ENCODE measurements at regions of chr4 and their contacts with region 1.

Region 1: GRCh38 chr4:86497980-86498862 is 95.9 kb upstream of the PTPN13 start:
- DNase-seq: no peak
- ATAC-seq: peak; percentile 96
- H3K4me3 Mint-ChIP-seq: no peak overlapping the region
- H3K27ac Mint-ChIP-seq: no peak overlapping the region
- H3K4me1 Mint-ChIP-seq: peaks cover 35% of the 10 kb centered on the region
- H3K27me3 Mint-ChIP-seq: no peaks in the 10 kb centered on the region
- CTCF ChIP-seq: peak; percentile 55

Region 2: DNA sequence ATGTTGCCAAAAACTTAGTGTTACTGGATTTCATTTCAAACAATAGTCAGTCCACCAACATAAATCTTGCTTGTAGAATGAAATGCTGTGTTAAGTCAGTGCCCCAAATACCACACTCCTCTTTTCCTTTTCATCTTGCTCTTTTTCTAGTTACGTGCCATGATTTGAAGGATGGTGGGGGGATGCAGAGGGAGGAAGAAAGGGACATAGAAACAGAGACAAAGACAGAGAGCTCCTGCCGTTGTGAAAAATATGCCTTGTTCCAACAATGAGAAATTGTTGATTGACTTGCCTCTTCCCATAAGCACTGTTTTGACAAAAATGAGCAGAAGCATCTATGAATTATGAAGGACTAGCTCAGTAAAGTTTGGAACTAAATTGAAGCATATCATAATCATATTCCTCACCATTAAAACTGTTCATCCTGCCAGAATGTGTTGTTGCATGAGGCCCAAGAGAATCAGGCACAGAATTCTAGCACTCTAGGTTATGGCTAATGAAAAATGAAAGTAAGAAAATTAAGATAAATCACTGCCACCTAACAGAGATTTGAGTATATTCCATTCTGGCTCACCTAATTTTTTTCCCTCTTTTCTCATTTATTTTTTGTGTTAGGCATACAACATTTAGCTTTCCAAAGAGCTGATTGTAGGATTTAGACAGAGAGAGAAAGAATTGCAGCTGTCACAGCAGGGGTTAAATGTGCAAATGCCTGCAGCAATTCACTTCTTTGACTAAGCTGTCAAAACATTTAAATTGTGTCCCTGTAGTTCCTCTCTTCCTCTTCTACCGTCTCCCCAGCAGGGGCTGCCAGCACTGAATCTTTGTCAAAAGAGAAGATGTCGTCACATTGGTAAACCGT is 15.7 kb before region 1 on chr4:
- CTCF ChIA-PET with region 1: interaction called, 27 read pairs
- POLR2A ChIA-PET with region 1: interaction called, 3 read pairs
- DNase-seq: peak; percentile 72
- ATAC-seq: peak; percentile 92
- H3K4me3 Mint-ChIP-seq: peak overlapping the region; percentile 37
- H3K27ac Mint-ChIP-seq: peak overlapping the region; percentile 98
- H3K4me1 Mint-ChIP-seq: peaks cover 35% of the 10 kb centered on the region
- H3K27me3 Mint-ChIP-seq: no peaks in the 10 kb centered on the region
- CTCF ChIP-seq: no peak

Region 3: DNA sequence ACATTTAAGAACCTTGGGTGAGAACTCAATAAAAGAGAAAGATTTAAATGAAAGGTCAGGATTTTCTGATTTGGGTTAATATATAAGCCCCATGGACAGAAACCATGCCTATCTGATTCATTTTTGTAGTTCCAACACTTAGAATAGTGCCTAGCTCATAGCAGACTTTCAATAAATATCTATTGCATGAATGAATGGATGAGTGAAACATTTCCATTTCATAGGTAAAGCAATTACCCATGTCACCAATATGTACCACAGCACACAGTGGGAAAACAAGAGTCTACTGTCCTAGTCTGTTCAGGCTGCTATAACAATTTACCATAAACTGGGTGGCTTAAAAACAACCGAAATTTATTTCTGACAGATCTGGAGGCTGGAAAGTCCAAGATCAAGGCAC is 32.0 kb after region 1 on chr4:
- CTCF ChIA-PET with region 1: no interaction called
- POLR2A ChIA-PET with region 1: no interaction called
- DNase-seq: no peak
- ATAC-seq: no peak
- H3K4me3 Mint-ChIP-seq: no peak overlapping the region
- H3K27ac Mint-ChIP-seq: no peak overlapping the region
- H3K4me1 Mint-ChIP-seq: no peaks in the 10 kb centered on the region
- H3K27me3 Mint-ChIP-seq: no peaks in the 10 kb centered on the region
- CTCF ChIP-seq: no peak

Region 4: DNA sequence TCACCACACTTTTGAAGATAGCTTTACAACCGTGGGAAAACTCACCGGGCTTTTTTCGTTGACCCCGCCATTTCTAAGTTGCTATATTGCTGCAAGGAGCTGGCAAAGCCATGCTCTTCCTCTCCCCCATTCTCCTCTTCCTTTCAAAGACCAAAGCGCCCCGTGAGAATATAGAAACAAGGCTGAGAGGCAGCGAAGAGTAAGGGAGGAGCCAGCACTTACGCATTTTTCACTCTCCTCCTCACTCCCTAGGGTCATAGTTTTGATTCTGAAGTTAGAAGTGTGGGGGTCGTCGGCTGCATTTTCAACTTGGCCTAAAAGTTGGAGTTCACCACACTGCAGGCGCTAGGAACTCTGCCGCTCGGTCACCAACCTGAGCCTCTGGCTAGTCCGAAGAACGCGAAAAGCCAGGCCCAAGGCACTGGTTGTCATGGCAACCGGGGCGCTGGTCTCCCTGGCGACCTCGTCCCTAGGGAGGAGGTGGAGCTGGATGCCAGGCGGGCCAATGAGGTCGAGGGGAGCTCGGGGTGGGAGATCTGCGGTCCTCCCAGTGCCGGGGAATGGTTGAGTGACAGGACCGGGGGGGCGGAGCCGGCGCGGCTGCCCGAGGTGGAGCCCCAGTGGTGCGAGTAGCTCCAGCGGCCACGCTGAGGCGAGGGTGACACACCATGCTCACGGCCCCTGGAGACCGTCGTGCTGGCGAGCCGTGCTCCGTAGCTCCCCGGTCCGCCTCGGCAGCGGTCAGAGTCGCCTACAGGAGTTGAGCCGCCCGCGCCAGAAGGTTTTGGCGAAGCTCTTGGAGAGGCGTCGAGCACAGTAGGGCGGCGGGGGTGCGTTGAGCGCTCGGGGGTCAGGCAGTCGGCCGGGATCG is 95.7 kb after region 1 on chr4 and contains the start of gene PTPN13:
- CTCF ChIA-PET with region 1: interaction called, 16 read pairs
- POLR2A ChIA-PET with region 1: interaction called, 8 read pairs
- DNase-seq: peak; percentile 100
- ATAC-seq: peak; percentile 97
- H3K4me3 Mint-ChIP-seq: peak within 1 kb of the TSS; percentile 96
- H3K27ac Mint-ChIP-seq: peak within 1 kb of the TSS; percentile 94
- H3K4me1 Mint-ChIP-seq: peaks cover 38% of the 10 kb centered on the region
- H3K27me3 Mint-ChIP-seq: no peaks in the 10 kb centered on the region
- CTCF ChIP-seq: no peak
- total RNA-seq, gene PTPN13: 42.5 to 49.7 TPM (median 44.0 TPM) in 3 replicates

Region 5: DNA sequence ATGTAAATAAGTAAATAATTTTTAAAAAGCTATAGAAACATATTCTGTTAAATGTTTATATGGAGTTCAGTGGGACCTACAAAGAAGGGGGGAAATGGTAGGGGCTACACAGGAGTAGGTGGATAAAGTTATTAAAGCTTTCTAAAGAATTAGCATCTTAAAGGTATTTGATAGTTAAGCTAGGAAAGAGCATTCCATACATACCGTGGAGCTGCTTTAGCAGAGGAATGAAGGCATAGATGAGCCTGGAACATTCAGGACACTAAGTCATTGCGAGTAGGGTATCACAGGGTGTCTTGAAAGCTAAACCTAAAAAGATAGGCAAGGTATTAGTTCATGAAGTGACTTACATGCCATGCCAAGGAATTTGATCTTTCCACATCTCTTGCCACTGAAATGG is 290.6 kb after region 1 on chr4:
- CTCF ChIA-PET with region 1: interaction called, 14 read pairs
- POLR2A ChIA-PET with region 1: no interaction called
- DNase-seq: no peak
- ATAC-seq: peak; percentile 95
- H3K4me3 Mint-ChIP-seq: no peak overlapping the region
- H3K27ac Mint-ChIP-seq: peak overlapping the region; percentile 68
- H3K4me1 Mint-ChIP-seq: peaks cover 16% of the 10 kb centered on the region
- H3K27me3 Mint-ChIP-seq: no peaks in the 10 kb centered on the region
- CTCF ChIP-seq: no peak

Measured in WTC11 (cell line).